ENCODE measurements at regions of chr1 and their contacts with region 1.

Region 1: DNA sequence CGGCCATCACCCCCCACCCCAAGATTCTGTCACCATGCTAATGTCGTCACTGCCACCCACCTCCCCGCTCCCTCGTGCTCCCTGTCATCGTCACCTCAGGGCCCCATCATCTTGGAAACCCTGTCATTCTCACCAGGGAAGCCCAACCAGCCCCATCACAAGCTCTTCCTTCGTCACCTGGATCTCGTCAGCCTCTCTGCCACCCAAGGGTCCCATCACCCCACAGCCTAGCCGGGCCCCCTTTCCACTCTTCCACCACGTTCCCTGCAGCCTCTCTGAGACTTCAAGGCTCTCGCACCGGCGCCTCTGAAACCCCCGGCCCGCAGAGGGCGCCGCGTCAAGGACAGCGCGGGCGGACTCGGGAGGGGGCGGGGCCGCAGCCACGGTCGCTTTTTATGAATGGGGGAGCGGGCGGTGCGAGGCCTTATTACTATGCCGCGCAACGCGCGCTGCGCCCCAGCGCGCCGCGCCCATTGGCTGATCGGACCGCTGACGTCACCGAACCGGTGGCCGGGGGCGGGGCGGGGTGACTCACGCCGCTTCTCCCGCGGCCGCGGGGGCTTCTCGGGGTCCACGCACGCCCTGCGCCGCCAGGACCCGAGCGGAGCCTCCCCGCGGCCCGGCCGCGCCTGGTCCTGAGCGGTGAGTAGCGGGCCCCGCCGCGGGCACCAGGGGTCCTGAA is at the start of gene GPR3:
- DNase-seq: peak; percentile 95
- ATAC-seq: peak; percentile 94
- H3K4me3 Mint-ChIP-seq: peak within 1 kb of the TSS; percentile 74
- H3K27ac Mint-ChIP-seq: peak within 1 kb of the TSS; percentile 76
- H3K4me1 Mint-ChIP-seq: peaks cover 8% of the 10 kb centered on the region
- H3K27me3 Mint-ChIP-seq: peaks cover 21% of the 10 kb centered on the region
- total RNA-seq, gene GPR3: 0.44 to 0.49 TPM

Region 2: DNA sequence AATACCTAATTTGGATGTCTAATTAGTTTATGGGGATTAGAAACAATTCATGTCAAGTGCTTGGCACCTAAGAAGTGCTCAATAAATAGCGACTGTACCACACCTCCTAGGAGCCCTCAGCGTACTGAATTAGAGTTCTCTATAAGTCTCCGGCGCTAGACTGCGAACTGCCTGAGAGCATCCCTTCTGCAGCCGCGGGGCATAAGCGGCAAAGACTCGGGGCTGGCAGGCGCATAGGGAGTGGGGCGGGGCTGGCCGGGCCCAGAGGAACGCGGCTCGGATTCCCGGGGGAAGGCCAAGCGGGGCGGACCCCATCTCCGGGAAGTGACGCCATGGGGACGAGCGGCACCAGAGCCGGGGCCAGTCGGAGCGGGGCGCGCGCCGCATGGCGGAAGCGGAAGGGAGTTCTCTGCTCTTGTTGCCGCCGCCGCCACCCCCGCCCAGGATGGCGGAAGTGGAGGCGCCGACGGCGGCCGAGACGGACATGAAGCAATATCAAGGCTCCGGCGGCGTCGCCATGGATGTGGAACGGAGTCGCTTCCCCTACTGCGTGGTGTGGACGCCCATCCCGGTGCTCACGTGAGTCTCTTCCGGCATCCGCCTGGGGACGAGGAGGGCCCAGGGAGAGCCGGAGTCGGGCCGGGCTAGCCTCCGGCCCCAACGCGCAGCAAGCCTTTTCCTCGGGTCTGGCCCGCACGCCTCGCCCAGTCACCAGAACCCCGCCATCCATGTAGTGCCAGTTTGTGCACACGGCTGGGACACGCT is 70.2 kb before region 1 on chr1 and contains the start of gene TMEM222:
- CTCF ChIA-PET with region 1: interaction called, 13 read pairs
- DNase-seq: peak; percentile 98
- ATAC-seq: peak; percentile 98
- H3K4me3 Mint-ChIP-seq: peak within 1 kb of the TSS; percentile 92
- H3K27ac Mint-ChIP-seq: peak within 1 kb of the TSS; percentile 96
- H3K4me1 Mint-ChIP-seq: peaks cover 43% of the 10 kb centered on the region
- H3K27me3 Mint-ChIP-seq: peaks cover 2% of the 10 kb centered on the region
- total RNA-seq, gene TMEM222: 31.0 to 44.2 TPM

Region 3: GRCh38 chr1:27341525-27342252 is 50.5 kb before region 1 on chr1 and contains the start of gene SYTL1:
- CTCF ChIA-PET with region 1: interaction called, 15 read pairs
- DNase-seq: peak; percentile 86
- ATAC-seq: peak; percentile 77
- H3K4me3 Mint-ChIP-seq: peak within 1 kb of the TSS; percentile 86
- H3K27ac Mint-ChIP-seq: peak within 1 kb of the TSS; percentile 84
- H3K4me1 Mint-ChIP-seq: peaks cover 34% of the 10 kb centered on the region
- H3K27me3 Mint-ChIP-seq: no peaks in the 10 kb centered on the region
- total RNA-seq, gene SYTL1: 60.7 to 85.3 TPM

Region 4: DNA sequence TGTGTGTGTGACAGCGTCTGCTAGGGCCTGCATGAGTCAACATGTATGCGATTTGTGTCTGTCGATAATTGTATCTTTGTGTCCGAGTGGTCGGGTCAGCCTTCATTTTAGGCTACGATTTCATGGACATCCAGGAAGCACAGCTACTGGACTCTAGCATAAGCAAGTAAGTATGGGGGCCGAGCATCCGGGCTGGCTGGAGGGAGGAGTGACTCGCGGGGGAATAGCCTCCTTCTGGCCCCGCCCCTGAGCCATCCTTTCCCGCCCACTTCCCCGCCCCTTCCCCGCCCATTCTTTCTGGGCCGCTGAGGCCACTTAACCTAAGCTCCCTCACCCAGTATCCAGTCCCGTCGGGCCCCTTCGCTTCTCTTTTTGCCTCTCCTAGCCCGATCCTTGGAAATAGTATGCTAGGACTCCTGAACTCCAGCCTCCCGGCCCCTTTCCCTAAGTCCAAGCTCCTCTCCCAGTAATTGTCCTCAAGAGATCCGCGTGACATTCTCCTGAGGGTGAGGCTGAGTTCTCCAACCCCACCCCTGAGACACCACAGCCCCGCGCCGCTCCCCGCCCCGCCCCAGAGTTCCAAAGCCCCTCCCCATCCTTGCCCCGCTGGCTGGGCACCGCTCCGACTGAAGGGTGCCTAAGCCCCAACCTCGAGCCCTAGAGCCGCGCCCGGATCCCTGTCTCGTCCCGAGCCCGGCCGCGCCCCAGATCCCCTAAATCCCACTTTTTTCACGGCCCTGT is 26.7 kb before region 1 on chr1:
- CTCF ChIA-PET with region 1: interaction called, 27 read pairs
- DNase-seq: peak; percentile 89
- ATAC-seq: peak; percentile 69
- H3K4me3 Mint-ChIP-seq: peak overlapping the region; percentile 78
- H3K27ac Mint-ChIP-seq: peak overlapping the region; percentile 79
- H3K4me1 Mint-ChIP-seq: peaks cover 27% of the 10 kb centered on the region
- H3K27me3 Mint-ChIP-seq: peaks cover 7% of the 10 kb centered on the region

Region 5: GRCh38 chr1:27455139-27455811 is 63.0 kb after region 1 on chr1:
- CTCF ChIA-PET with region 1: no interaction called
- DNase-seq: peak; percentile 70
- ATAC-seq: peak; percentile 91
- H3K4me3 Mint-ChIP-seq: peak overlapping the region; percentile 5
- H3K27ac Mint-ChIP-seq: peak overlapping the region; percentile 77
- H3K4me1 Mint-ChIP-seq: peaks cover 29% of the 10 kb centered on the region
- H3K27me3 Mint-ChIP-seq: no peaks in the 10 kb centered on the region

Region 6: DNA sequence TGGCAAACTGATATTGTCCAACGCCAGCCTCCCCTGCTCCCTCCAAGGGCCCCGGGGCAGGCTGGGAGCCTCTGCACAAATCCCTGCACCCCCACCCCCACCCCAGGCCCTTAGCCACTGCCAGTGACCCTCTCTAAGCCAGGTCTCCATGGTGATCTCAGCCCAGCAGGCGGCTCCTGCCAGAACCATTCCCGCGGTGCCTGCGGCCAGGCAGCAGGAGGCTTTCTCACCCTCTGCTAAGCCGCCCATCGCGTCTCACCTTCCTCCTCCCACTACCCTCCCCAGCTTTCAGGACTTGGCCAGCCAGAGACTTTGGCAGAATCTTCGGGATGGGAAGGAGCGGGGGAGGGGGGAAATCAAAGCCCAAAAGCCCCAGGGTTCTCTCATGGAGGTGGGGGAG is 144.5 kb after region 1 on chr1:
- CTCF ChIA-PET with region 1: no interaction called
- DNase-seq: no peak
- ATAC-seq: no peak
- H3K4me3 Mint-ChIP-seq: no peak overlapping the region
- H3K27ac Mint-ChIP-seq: no peak overlapping the region
- H3K4me1 Mint-ChIP-seq: peaks cover 11% of the 10 kb centered on the region
- H3K27me3 Mint-ChIP-seq: no peaks in the 10 kb centered on the region